ENCODE measurements at regions of chr14 and their contacts with region 1.

Region 1: GRCh38 chr14:99333841-99334635 is 62.0 kb upstream of the BCL11B start:
- DNase-seq: no peak
- H3K4me3 Mint-ChIP-seq: no peak overlapping the region
- H3K27ac Mint-ChIP-seq: no peak overlapping the region
- H3K4me1 Mint-ChIP-seq: no peaks in the 10 kb centered on the region
- H3K27me3 Mint-ChIP-seq: peaks cover 20% of the 10 kb centered on the region
- CTCF ChIP-seq: no peak

Region 2: GRCh38 chr14:99320105-99320572 is 13.9 kb before region 1 on chr14:
- CTCF ChIA-PET with region 1: interaction called, 14 read pairs
- POLR2A ChIA-PET with region 1: no interaction called
- intact Hi-C with region 1: no loop called
- DNase-seq: peak; percentile 65
- H3K4me3 Mint-ChIP-seq: no peak overlapping the region
- H3K27ac Mint-ChIP-seq: no peak overlapping the region
- H3K4me1 Mint-ChIP-seq: peaks cover 6% of the 10 kb centered on the region
- H3K27me3 Mint-ChIP-seq: no peaks in the 10 kb centered on the region
- CTCF ChIP-seq: peak; percentile 89